Activated T-helper 2 cell treated with anti-CD3 and anti-CD28 coated beads, Interferon-gamma antibody, Interleukin-2, Interleukin-4, amounts not matched to agents 10 μg/mL and 5 μg/mL and 100 μg/mL, durations not matched to agents 14 hours and 24 hours and 36 hours (primary cell): ENCODE measurements at regions of chr4 and their contacts with region 1.

Region 1: GRCh38 chr4:22607382-22607781 is 85.4 kb upstream of the GBA3 start:
- DNase-seq: peak; percentile 53
- H3K4me3 Mint-ChIP-seq: no peak overlapping the region
- H3K27ac Mint-ChIP-seq: no peak overlapping the region
- H3K4me1 Mint-ChIP-seq: peaks cover 42% of the 10 kb centered on the region
- H3K27me3 Mint-ChIP-seq: peaks cover 2% of the 10 kb centered on the region

Region 2: GRCh38 chr4:22416403-22416802 is 191.0 kb before region 1 on chr4:
- intact Hi-C with region 1: loop called (anchors 2 kb)
- DNase-seq: no peak
- H3K4me3 Mint-ChIP-seq: peak overlapping the region; percentile 53
- H3K27ac Mint-ChIP-seq: peak overlapping the region; percentile 73
- H3K4me1 Mint-ChIP-seq: peaks cover 35% of the 10 kb centered on the region
- H3K27me3 Mint-ChIP-seq: no peaks in the 10 kb centered on the region

Region 3: DNA sequence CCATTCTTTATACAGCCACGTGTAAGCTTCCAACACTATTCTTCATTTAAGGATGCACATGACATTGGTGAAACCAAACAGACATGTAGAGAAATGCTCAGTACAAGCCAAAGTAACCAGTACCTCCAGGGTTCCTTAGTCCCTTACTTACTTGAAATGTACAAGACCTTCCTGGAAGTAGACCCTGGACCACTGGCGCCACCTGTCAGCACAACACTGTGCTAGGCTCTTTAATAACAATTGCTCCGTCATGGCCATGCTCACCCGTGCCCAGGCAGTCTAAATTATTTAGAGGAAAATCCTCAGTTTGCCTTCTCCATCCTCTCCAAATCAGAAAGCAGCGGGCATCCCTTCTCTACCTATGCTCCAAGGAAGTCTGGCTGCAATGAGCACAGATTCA is 144.2 kb before region 1 on chr4:
- intact Hi-C with region 1: loop called (anchors 5 kb)
- DNase-seq: no peak
- H3K4me3 Mint-ChIP-seq: no peak overlapping the region
- H3K27ac Mint-ChIP-seq: peak overlapping the region; percentile 35
- H3K4me1 Mint-ChIP-seq: peaks cover 30% of the 10 kb centered on the region
- H3K27me3 Mint-ChIP-seq: no peaks in the 10 kb centered on the region

Region 4: DNA sequence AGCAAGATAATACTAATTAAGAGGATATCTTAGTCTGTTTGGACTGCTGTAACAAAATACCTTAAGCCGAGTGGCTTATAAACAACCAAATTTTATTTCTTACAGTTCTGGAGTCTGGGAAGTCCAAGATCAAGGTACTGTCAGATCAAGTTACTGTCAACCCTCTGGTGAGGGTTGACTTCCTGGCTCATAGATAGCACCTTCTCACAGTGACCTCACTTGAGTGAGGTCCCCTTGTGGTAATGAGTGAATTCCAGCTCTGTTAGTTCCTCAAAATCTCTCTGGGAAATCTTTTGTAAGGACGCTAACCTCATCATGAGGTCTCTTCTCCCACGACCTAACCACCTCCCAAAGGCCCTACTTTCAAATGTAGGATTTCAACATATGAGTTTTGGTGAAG is 54.6 kb before region 1 on chr4:
- intact Hi-C with region 1: no loop called
- DNase-seq: no peak
- H3K4me3 Mint-ChIP-seq: no peak overlapping the region
- H3K27ac Mint-ChIP-seq: no peak overlapping the region
- H3K4me1 Mint-ChIP-seq: no peaks in the 10 kb centered on the region
- H3K27me3 Mint-ChIP-seq: no peaks in the 10 kb centered on the region

Region 5: DNA sequence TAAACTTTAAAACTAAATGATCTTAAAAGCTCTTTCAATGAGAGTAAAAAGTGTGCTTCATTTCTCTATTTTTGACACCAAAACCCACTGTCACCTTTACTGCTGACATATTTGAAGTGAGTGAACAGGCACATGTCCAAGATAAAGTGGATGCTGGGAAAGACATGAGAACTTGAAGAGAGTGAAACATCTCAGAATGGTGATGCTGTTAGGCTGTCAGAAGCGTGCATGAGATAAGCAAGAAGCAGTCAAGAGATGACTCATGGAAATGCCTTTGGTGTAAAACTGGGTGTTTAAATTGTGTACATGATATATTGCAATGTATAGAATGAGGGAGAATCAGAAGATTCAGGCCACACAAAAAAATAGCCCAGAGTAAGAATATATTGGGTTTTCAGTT is 63.6 kb after region 1 on chr4:
- intact Hi-C with region 1: loop called (anchors 2 kb)
- DNase-seq: no peak
- H3K4me3 Mint-ChIP-seq: no peak overlapping the region
- H3K27ac Mint-ChIP-seq: peak overlapping the region; percentile 9
- H3K4me1 Mint-ChIP-seq: peaks cover 53% of the 10 kb centered on the region
- H3K27me3 Mint-ChIP-seq: no peaks in the 10 kb centered on the region

Region 6: DNA sequence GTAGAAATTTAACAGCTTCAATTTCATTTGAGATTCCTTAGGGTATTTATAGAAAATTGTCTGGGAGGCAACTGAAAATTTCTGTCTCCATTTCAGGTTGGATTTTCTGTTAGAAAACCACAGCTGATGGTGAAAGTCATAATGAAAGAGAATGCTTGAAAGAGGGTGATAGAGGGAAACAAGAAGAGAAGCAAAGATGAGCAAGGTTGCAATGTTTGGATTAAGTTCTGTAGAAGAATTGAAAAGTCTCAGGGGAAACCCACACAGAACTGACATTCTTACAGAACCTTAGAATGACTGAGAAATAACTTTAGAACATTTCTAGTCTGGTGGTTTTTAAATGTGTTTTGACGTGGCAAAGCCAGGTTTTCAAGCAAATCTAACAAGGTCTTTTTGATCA is 100.0 kb after region 1 on chr4:
- intact Hi-C with region 1: loop called (anchors 5 kb)
- DNase-seq: no peak
- H3K4me3 Mint-ChIP-seq: no peak overlapping the region
- H3K27ac Mint-ChIP-seq: peak overlapping the region; percentile 25
- H3K4me1 Mint-ChIP-seq: peaks cover 22% of the 10 kb centered on the region
- H3K27me3 Mint-ChIP-seq: no peaks in the 10 kb centered on the region